OCI-LY7 (cell line): ENCODE measurements at regions of chr16 and their contacts with region 1.

Region 1: DNA sequence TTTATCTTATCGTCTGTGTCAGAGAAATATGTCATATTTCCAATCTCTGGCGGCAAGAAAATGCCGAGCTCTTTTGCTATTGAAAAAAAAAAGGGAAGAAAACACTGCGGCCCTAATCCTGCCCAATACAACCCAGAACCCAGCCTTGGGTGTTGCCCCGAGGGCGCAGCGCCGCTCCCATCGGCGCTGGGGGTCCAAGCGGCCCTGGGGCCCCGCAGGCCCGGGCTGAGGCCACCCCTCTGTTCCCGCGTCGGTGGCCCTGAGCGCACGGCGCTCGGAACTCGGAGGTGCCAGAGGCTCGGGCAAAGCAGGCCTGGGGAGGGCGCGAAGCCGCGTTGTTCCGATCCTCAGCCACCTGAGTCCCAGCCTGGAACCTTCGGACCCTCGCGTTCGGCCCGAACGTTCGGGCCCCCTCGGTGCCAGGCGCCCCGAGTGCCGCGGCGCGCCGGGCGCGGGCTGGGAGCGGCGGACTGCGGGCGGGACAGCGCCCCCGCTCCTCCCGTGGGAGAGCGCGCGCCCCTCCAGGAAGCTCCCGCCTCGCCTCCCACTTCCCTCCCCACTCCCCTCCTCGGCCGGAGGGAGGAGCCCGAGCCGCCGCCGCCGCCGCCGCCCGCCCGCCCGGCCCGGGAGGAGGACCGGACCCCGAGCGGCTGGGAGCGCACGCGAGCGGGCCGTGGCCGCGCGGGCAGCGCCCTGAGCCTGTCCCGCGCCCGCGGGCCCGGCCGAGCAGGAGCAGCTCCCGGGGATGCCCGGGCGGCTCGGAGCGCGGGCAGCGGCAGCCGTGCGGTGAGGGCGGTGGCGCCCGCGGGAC is at the start of gene CPNE2:
- DNase-seq: peak; percentile 56
- H3K4me3 ChIP-seq: peak within 1 kb of the TSS; percentile 76
- H3K27ac ChIP-seq: peak within 1 kb of the TSS; percentile 19
- H3K4me1 ChIP-seq: peaks cover 60% of the 10 kb centered on the region
- CTCF ChIP-seq: no peak
- total RNA-seq, gene CPNE2: 44.7 and 44.8 TPM in 2 replicates

Region 2: GRCh38 chr16:56898847-56899246 is 193.3 kb before region 1 on chr16:
- CTCF ChIA-PET with region 1: no interaction called
- POLR2A ChIA-PET with region 1: no interaction called
- intact Hi-C with region 1: no loop called
- DNase-seq: no peak
- H3K4me3 ChIP-seq: peak overlapping the region; percentile 15
- H3K27ac ChIP-seq: no peak overlapping the region
- H3K4me1 ChIP-seq: peaks cover 37% of the 10 kb centered on the region
- CTCF ChIP-seq: no peak

Region 3: GRCh38 chr16:57000271-57001025 is 91.7 kb before region 1 on chr16:
- CTCF ChIA-PET with region 1: no interaction called
- POLR2A ChIA-PET with region 1: no interaction called
- intact Hi-C with region 1: no loop called
- DNase-seq: no peak
- H3K4me3 ChIP-seq: no peak overlapping the region
- H3K27ac ChIP-seq: peak overlapping the region; percentile 21
- H3K4me1 ChIP-seq: peaks cover 53% of the 10 kb centered on the region
- CTCF ChIP-seq: no peak

Region 4: GRCh38 chr16:57029161-57030160 is 62.7 kb before region 1 on chr16:
- CTCF ChIA-PET with region 1: no interaction called
- POLR2A ChIA-PET with region 1: no interaction called
- intact Hi-C with region 1: no loop called
- DNase-seq: no peak
- H3K4me3 ChIP-seq: no peak overlapping the region
- H3K27ac ChIP-seq: no peak overlapping the region
- H3K4me1 ChIP-seq: peaks cover 29% of the 10 kb centered on the region
- CTCF ChIP-seq: no peak

Region 5: GRCh38 chr16:57045694-57046381 is 46.3 kb before region 1 on chr16:
- CTCF ChIA-PET with region 1: no interaction called
- POLR2A ChIA-PET with region 1: no interaction called
- intact Hi-C with region 1: no loop called
- DNase-seq: peak; percentile 92
- H3K4me3 ChIP-seq: peak overlapping the region; percentile 51
- H3K27ac ChIP-seq: peak overlapping the region; percentile 98
- H3K4me1 ChIP-seq: peaks cover 76% of the 10 kb centered on the region
- CTCF ChIP-seq: peak; percentile 89

Region 6: DNA sequence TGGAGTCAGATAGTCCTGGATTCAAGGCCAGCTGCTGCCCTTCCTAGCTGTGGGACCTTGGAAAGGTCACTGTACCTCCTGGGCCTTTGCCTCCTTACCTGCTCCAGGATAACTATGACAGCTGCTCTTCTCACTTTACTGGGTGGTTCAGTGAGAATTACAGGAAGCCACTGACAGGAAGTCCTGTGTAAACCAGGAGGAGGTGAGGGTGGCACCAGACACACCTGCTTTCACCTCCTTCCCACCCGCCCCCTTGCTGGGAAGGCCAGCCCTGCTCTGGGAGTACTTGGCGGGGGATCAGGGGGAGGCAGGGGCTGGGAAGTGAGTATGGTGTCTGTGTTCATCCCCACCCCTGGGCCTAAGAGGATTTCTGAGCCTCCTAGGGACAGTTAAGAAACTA is 42.8 kb after region 1 on chr16:
- CTCF ChIA-PET with region 1: interaction called, 20 read pairs
- POLR2A ChIA-PET with region 1: interaction called, 4 read pairs
- intact Hi-C with region 1: no loop called
- DNase-seq: peak; percentile 72
- H3K4me3 ChIP-seq: peak overlapping the region; percentile 33
- H3K27ac ChIP-seq: peak overlapping the region; percentile 62
- H3K4me1 ChIP-seq: peaks cover 42% of the 10 kb centered on the region
- CTCF ChIP-seq: no peak

Region 7: GRCh38 chr16:57167953-57168352 is 75.8 kb after region 1 on chr16:
- CTCF ChIA-PET with region 1: no interaction called
- POLR2A ChIA-PET with region 1: interaction called, 3 read pairs
- intact Hi-C with region 1: loop called (anchors 2 kb)
- DNase-seq: peak; percentile 84
- H3K4me3 ChIP-seq: no peak overlapping the region
- H3K27ac ChIP-seq: no peak overlapping the region
- H3K4me1 ChIP-seq: peaks cover 10% of the 10 kb centered on the region
- CTCF ChIP-seq: peak; percentile 96

Region 8: GRCh38 chr16:57256642-57257395 is 164.6 kb after region 1 on chr16:
- CTCF ChIA-PET with region 1: interaction called, 12 read pairs
- POLR2A ChIA-PET with region 1: no interaction called
- intact Hi-C with region 1: no loop called
- DNase-seq: no peak
- H3K4me3 ChIP-seq: no peak overlapping the region
- H3K27ac ChIP-seq: no peak overlapping the region
- H3K4me1 ChIP-seq: peaks cover 9% of the 10 kb centered on the region
- CTCF ChIP-seq: no peak